Sciatic nerve (tissue), 2 donors: ENCODE measurements at regions of chr20 and their contacts with region 1.

Region 1: DNA sequence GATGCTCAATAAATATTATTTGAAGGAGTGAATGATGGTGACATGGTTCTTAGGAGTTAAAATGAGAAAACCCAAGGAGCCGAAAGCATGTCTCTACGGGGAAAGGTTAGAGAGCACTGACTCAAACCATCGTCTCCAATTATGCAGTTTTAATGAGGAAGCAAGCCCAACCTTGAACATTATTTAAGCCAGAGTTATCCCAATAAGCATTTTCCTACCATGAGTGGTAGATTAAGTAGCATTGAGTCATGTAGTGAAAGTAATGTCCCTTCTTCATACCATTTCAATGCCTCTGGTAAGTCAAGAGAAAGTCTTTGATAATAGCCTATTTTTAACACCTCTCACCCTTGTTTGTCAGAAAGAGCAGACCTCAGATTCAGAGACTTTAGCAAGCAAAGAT is 13.5 kb downstream of the TSHZ2 start:
- DNase-seq: no peak
- ATAC-seq: no peak

Region 2: DNA sequence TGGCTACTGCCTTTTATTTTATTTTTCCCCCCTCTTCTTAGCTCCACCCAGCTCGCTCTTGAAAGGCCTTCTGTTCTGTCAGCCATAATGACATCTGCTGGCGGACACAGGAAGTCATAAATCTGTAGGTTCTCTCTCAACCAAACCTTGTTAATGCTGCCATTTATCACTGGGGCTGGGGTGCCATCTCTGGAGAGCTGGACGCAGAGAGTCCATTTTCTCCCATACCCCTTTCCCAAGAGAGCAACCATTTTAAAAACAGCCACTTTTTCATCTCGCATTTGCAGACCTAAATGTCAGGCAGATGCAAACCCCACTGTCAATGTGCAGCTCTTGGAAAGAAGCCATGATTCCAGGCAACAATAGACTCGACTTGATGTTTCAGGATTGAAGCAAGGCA is 26.6 kb before region 1 on chr20:
- intact Hi-C with region 1: no loop called
- DNase-seq: no peak
- ATAC-seq: no peak

Region 3: GRCh38 chr20:53023732-53024520 is 38.2 kb after region 1 on chr20:
- intact Hi-C with region 1: loop called (anchors 1 kb)
- DNase-seq: no peak
- ATAC-seq: no peak

Region 4: GRCh38 chr20:53643031-53643832 is 657.5 kb after region 1 on chr20:
- intact Hi-C with region 1: no loop called
- DNase-seq: no peak
- ATAC-seq: peak; percentile 81